Endothelial cell of umbilical vein (primary cell): ENCODE measurements at regions of chr16 and their contacts with region 1.

Region 1: GRCh38 chr16:24036614-24037013 is 200.8 kb downstream of the PRKCB start:
- DNase-seq: peak; percentile 43
- H3K4me3 ChIP-seq: no peak overlapping the region
- H3K27ac ChIP-seq: no peak overlapping the region
- H3K4me1 ChIP-seq: no peaks in the 10 kb centered on the region
- H3K27me3 ChIP-seq: no peaks in the 10 kb centered on the region
- CTCF ChIP-seq: peak; percentile 47 to 55
- POLR2A ChIP-seq: no peak

Region 2: GRCh38 chr16:23734176-23734893 is 302.3 kb before region 1 on chr16:
- CTCF ChIA-PET with region 1: interaction called, 3 read pairs
- POLR2A ChIA-PET with region 1: no interaction called
- dilution Hi-C with region 1: no loop called
- intact Hi-C with region 1: loop called (anchors 1 kb)
- DNase-seq: no peak
- H3K4me3 ChIP-seq: no peak overlapping the region
- H3K27ac ChIP-seq: no peak overlapping the region
- H3K4me1 ChIP-seq: no peaks in the 10 kb centered on the region
- H3K27me3 ChIP-seq: no peaks in the 10 kb centered on the region
- CTCF ChIP-seq: no peak
- POLR2A ChIP-seq: no peak

Region 3: GRCh38 chr16:23803591-23804123 is 233.0 kb before region 1 on chr16:
- CTCF ChIA-PET with region 1: interaction called, 17 read pairs
- POLR2A ChIA-PET with region 1: no interaction called
- dilution Hi-C with region 1: no loop called
- intact Hi-C with region 1: loop called (anchors 1 kb)
- DNase-seq: peak; percentile 15
- H3K4me3 ChIP-seq: no peak overlapping the region
- H3K27ac ChIP-seq: no peak overlapping the region
- H3K4me1 ChIP-seq: no peaks in the 10 kb centered on the region
- H3K27me3 ChIP-seq: no peaks in the 10 kb centered on the region
- CTCF ChIP-seq: peak; percentile 16 to 37
- POLR2A ChIP-seq: no peak